CD4-positive, alpha-beta memory T cell (primary cell): ENCODE measurements at regions of chr10 and their contacts with region 1.

Region 1: DNA sequence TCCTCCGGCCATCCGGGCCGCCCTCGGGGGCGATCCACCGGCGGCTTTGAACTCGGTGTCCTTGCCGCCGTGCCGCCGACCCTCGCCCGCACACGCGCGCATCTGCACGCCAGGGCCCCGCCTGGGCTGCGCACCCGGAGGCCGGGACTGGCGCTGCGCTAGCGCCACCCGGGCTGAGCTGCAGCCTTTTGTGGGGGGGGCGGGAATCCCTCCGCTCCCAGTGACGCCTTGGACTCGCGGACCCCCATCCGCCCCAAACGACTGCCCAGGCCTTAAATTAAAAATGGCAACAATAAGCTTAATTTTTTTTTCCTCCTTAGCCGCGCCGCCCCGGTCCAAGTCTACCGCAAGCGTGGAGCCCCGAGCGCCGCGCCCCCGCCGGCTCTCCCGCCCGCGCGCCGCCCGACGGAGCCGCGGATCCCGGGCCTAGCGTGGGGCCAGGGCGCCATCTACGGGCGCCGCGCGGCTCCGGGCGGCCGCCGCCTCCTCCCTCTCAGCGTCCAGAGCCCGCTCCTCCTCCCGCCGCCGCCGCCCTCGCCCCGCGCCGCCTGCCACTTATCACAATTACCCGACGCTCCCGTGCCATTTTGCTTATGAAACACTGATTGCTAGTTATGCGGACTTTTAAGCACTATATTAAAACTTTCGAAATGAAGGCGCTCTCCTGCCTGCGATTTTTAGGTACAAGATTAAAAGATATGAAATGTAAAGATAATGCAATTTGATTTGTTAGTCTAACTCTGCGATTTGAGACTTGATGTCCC is 7.5 kb upstream of the EBF3 start:
- DNase-seq: no peak
- H3K4me3 ChIP-seq: no peak overlapping the region
- H3K4me3 Mint-ChIP-seq: peak overlapping the region; percentile 16 to 82 (median 48)
- H3K27ac ChIP-seq: no peak overlapping the region
- H3K27ac Mint-ChIP-seq: peak overlapping the region in 2 of 7 donors; percentile 55 to 65
- H3K4me1 ChIP-seq: no peaks in the 10 kb centered on the region
- H3K4me1 Mint-ChIP-seq: peaks cover 6 to 17% (median 14%) of the 10 kb centered on the region in 4 donors
- H3K27me3 ChIP-seq: peaks cover 25% of the 10 kb centered on the region
- H3K27me3 Mint-ChIP-seq: peaks cover 37 to 45% of the 10 kb centered on the region in 2 donors

Region 2: GRCh38 chr10:128263891-128264688 is 1707.5 kb before region 1 on chr10:
- CTCF ChIA-PET with region 1: no interaction called
- POLR2A ChIA-PET with region 1: no interaction called
- intact Hi-C with region 1: loop called (anchors 10 kb)
- DNase-seq: peak; percentile 9 to 52 (median 20)
- H3K4me3 ChIP-seq: no peak overlapping the region
- H3K4me3 Mint-ChIP-seq: no peak overlapping the region
- H3K27ac ChIP-seq: no peak overlapping the region
- H3K27ac Mint-ChIP-seq: no peak overlapping the region
- H3K4me1 ChIP-seq: no peaks in the 10 kb centered on the region
- H3K4me1 Mint-ChIP-seq: peaks cover 0 to 2% (median 0%) of the 10 kb centered on the region in 4 donors
- H3K27me3 ChIP-seq: peaks cover 8% of the 10 kb centered on the region
- H3K27me3 Mint-ChIP-seq: peaks cover 24 to 41% of the 10 kb centered on the region in 2 donors

Region 3: GRCh38 chr10:129756912-129757901 is 214.4 kb before region 1 on chr10:
- CTCF ChIA-PET with region 1: no interaction called
- POLR2A ChIA-PET with region 1: no interaction called
- intact Hi-C with region 1: no loop called
- DNase-seq: no peak
- H3K4me3 ChIP-seq: no peak overlapping the region
- H3K4me3 Mint-ChIP-seq: peak overlapping the region in 1 of 8 donors; percentile 15
- H3K27ac ChIP-seq: no peak overlapping the region
- H3K27ac Mint-ChIP-seq: no peak overlapping the region
- H3K4me1 ChIP-seq: no peaks in the 10 kb centered on the region
- H3K4me1 Mint-ChIP-seq: peaks cover 0 to 11% (median 3%) of the 10 kb centered on the region in 4 donors
- H3K27me3 ChIP-seq: no peaks in the 10 kb centered on the region
- H3K27me3 Mint-ChIP-seq: no peaks in the 10 kb centered on the region